OCI-LY7 (cell line): ENCODE measurements at regions of chr3 and their contacts with region 1.

Region 1: DNA sequence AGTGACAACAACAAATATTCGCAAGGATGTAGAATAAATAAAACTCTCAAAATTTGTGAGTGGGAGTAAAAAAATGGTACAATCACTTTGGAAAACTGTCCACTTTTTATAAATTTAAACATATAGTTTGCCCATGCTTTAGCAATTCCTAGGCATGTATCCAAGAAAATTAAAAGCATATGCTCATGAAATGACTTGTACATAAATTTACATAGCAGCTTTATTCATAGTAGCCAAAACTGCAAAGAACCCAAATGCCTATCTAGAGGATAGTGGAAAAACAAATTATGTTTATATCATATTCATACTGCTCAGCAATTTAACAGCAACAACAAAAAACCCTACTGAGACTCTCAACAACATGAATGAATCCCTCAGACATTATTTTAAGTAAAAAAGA is 363.6 kb upstream of the CCDC54 start:
- DNase-seq: no peak
- H3K4me3 ChIP-seq: no peak overlapping the region
- H3K27ac ChIP-seq: no peak overlapping the region
- H3K4me1 ChIP-seq: no peaks in the 10 kb centered on the region
- CTCF ChIP-seq: no peak

Region 2: DNA sequence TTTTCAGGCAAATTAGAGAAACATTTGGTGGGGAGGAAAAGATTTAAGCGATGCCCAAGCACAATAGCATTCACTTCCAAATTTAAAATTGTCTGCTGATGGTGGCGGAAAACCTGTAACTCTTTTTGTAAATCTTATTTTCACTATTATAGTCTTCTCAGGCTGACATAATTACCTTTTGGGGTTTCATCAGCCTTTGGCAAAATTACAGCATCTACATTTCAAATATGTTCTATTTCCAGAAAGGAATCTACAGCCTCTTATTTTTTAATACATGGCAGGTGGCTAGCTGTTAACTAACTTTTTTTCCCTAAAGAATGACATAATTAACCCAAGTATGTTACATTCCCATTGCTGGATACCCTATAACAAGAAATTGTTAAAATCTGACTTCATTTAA is 27.9 kb before region 1 on chr3:
- CTCF ChIA-PET with region 1: no interaction called
- POLR2A ChIA-PET with region 1: no interaction called
- intact Hi-C with region 1: loop called (anchors 1 kb)
- DNase-seq: no peak
- H3K4me3 ChIP-seq: no peak overlapping the region
- H3K27ac ChIP-seq: no peak overlapping the region
- H3K4me1 ChIP-seq: no peaks in the 10 kb centered on the region
- CTCF ChIP-seq: no peak